ENCODE measurements at regions of chrX and their contacts with region 1.

Region 1: DNA sequence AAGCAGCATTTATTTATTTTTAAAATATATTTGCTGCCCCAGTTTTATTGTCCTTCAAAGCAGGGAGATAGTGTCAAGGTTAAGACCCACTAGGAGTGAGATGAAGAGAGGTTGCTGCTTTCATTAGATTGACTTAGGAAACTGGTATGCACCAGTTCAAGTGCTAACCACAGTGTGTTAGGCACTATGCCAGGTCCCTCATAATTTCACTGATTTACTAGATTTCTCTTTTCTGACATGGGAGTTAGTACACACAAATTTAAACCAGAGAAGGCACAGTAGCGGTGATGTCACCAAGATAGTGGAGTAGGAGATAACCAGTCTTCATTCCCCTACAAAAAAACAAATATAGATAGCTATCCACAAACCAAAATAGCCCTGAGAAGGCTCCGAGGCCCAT is 14.3 kb downstream of the RRAGB start:
- DNase-seq: no peak
- H3K4me3 ChIP-seq: no peak overlapping the region
- H3K27ac ChIP-seq: no peak overlapping the region
- H3K4me1 ChIP-seq: no peaks in the 10 kb centered on the region
- H3K27me3 ChIP-seq: no peaks in the 10 kb centered on the region
- CTCF ChIP-seq: no peak
- EP300 ChIP-seq: no peak
- POLR2A ChIP-seq: no peak

Region 2: GRCh38 chrX:55717521-55718497 is 14.0 kb before region 1 on chrX and contains the start of gene RRAGB:
- in situ Hi-C with region 1: no loop called
- intact Hi-C with region 1: no loop called
- DNase-seq: peak; percentile 95
- H3K4me3 ChIP-seq: peak within 1 kb of the TSS; percentile 24 to 69 (median 50)
- H3K27ac ChIP-seq: peak within 1 kb of the TSS; percentile 83 to 95 (median 88)
- H3K4me1 ChIP-seq: peaks cover 0 to 14% (median 0%) of the 10 kb centered on the region in 4 donors
- H3K27me3 ChIP-seq: no peaks in the 10 kb centered on the region
- CTCF ChIP-seq: peak; percentile 46 to 89 (median 63)
- EP300 ChIP-seq: no peak
- POLR2A ChIP-seq: peak; percentile 64
- total RNA-seq, gene RRAGB: 2.2 to 16.7 (median 8.9) TPM

Region 3: GRCh38 chrX:56268888-56269287 is 537.1 kb after region 1 on chrX:
- in situ Hi-C with region 1: loop called in 1 of 4 experiments (anchors 25 kb)
- intact Hi-C with region 1: no loop called
- DNase-seq: no peak
- H3K4me3 ChIP-seq: no peak overlapping the region
- H3K27ac ChIP-seq: no peak overlapping the region
- H3K4me1 ChIP-seq: no peaks in the 10 kb centered on the region
- H3K27me3 ChIP-seq: no peaks in the 10 kb centered on the region
- CTCF ChIP-seq: no peak
- EP300 ChIP-seq: no peak
- POLR2A ChIP-seq: no peak

Measured in transverse colon (tissue), 4 donors.